ENCODE measurements at regions of chr1 and their contacts with region 1.

Region 1: DNA sequence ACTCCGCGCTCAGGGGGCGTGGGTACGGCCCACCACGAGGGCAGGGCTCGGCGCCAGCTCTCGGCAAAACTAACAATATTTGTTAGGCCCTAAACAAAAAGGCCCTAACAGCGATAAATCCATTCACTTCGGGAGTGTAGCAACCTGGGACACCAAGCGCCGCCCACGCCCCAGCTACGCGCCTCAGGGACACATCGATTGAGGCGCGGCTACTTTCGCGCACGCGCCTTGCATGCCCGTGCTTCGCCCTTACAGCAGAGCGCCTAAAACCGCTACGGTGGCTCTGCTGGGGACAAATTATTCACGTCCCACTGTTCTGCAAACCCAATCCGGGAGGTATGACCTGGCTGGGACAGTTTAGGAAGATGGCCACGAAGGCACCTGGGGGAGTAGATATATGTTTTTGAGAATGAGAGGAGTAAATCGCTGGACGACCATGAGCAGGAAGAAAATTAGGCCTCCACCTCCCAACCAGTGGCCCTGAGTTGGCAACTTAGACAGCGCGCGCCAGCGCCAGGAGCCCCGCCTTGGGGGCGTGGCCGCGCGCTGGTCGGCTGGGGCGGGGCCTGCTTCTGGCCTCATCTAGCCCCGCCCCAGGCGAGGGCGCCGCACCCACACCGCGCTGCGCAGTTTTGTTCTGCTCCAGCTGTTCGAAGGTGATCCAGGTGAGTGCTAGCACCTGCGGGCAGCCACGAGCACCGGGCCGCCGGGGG is at the start of gene MGST3:
- DNase-seq: peak; percentile 81 to 96 (median 91)
- ATAC-seq: peak; percentile 93
- H3K4me3 ChIP-seq: peak within 1 kb of the TSS; percentile 62 to 71
- H3K4me3 Mint-ChIP-seq: no peak within 1 kb of the TSS
- H3K27ac ChIP-seq: peak within 1 kb of the TSS; percentile 56 to 89
- H3K27ac Mint-ChIP-seq: peak within 1 kb of the TSS; percentile 66
- H3K4me1 ChIP-seq: peaks cover 17% of the 10 kb centered on the region
- H3K4me1 Mint-ChIP-seq: peaks cover 19% of the 10 kb centered on the region
- H3K27me3 ChIP-seq: no peaks in the 10 kb centered on the region
- H3K27me3 Mint-ChIP-seq: no peaks in the 10 kb centered on the region
- CTCF ChIP-seq: no peak
- total RNA-seq, gene MGST3: 13.8 to 16.6 TPM

Region 2: DNA sequence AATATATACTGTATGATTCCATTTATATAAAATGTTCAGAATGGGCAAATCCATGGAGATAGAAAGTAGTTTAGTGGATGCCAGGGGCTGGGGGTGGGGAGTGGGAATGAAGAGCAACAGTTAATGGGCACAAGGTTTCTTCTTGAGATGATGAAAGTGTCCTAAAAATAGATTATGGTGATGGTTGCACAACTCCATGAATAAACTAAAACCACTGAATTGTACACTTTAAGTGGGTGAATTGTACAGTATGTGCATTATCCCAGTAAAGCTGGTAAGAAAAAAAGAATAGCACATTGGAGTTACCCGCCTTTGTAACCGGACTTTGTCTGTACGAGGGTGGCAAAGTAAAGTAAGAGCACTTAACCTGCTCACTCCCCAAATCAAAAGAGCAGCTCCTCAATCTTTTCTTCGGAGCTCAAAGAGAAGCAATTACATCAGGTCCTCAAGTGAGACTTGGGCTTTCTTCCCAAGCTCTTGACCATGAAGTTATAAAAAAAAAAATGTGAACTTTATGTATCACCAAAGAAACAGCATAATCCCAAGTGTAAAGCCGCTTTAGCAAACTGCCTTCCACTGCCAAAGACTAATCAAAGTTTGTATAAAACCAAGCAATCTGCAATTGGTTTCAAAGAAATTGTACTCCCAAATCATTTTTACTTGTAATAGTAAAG is 35.5 kb after region 1 on chr1:
- CTCF ChIA-PET with region 1: no interaction called
- POLR2A ChIA-PET with region 1: no interaction called
- intact Hi-C with region 1: no loop called
- DNase-seq: no peak
- ATAC-seq: no peak
- H3K4me3 ChIP-seq: no peak overlapping the region
- H3K4me3 Mint-ChIP-seq: no peak overlapping the region
- H3K27ac ChIP-seq: no peak overlapping the region
- H3K27ac Mint-ChIP-seq: no peak overlapping the region
- H3K4me1 ChIP-seq: no peaks in the 10 kb centered on the region
- H3K4me1 Mint-ChIP-seq: no peaks in the 10 kb centered on the region
- H3K27me3 ChIP-seq: no peaks in the 10 kb centered on the region
- H3K27me3 Mint-ChIP-seq: no peaks in the 10 kb centered on the region
- CTCF ChIP-seq: no peak

Region 3: DNA sequence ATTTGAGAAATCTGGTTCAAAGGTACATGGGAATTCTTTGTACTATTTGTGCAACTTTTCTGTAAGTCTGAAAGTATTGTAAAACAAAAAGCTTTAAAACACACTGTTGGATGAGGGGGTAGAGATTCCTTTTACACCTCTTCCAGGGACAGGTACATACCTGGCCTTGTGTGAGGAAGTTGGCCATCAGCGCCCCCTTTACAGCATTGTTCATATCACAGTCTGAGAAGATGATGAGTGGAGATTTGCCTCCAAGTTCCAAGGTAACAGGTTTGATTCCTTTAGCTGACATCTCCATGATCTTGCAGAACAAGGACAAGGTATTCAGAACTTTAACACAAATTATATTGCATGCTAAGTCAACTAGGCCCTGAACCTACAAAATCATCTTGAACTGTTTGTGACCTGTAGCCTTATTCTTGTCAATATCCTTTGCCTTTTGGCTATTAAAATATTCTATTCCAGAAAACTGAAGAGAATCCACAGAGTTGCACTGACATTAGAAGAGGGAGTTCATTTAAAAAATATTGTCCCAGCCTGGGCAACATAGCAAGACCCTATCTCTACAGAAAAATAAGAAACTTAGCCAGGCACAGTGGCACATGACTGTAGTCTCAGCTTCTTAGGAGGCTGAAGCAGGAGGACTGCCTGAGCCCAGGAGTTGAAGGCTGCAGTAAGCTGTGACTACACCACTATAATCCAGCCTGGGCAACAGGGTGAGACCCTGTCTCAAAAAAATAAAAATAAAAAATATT is 48.7 kb after region 1 on chr1:
- CTCF ChIA-PET with region 1: no interaction called
- POLR2A ChIA-PET with region 1: no interaction called
- intact Hi-C with region 1: loop called in 1 of 2 experiments (anchors 5 kb)
- DNase-seq: no peak
- ATAC-seq: no peak
- H3K4me3 ChIP-seq: no peak overlapping the region
- H3K4me3 Mint-ChIP-seq: no peak overlapping the region
- H3K27ac ChIP-seq: no peak overlapping the region
- H3K27ac Mint-ChIP-seq: peak overlapping the region; percentile 2
- H3K4me1 ChIP-seq: peaks cover 15% of the 10 kb centered on the region
- H3K4me1 Mint-ChIP-seq: peaks cover 20% of the 10 kb centered on the region
- H3K27me3 ChIP-seq: no peaks in the 10 kb centered on the region
- H3K27me3 Mint-ChIP-seq: no peaks in the 10 kb centered on the region
- CTCF ChIP-seq: no peak

Region 4: GRCh38 chr1:165726169-165726568 is 95.4 kb after region 1 on chr1:
- CTCF ChIA-PET with region 1: no interaction called
- POLR2A ChIA-PET with region 1: no interaction called
- intact Hi-C with region 1: no loop called
- DNase-seq: no peak
- ATAC-seq: no peak
- H3K4me3 ChIP-seq: no peak overlapping the region
- H3K4me3 Mint-ChIP-seq: no peak overlapping the region
- H3K27ac ChIP-seq: no peak overlapping the region
- H3K27ac Mint-ChIP-seq: no peak overlapping the region
- H3K4me1 ChIP-seq: no peaks in the 10 kb centered on the region
- H3K4me1 Mint-ChIP-seq: no peaks in the 10 kb centered on the region
- H3K27me3 ChIP-seq: no peaks in the 10 kb centered on the region
- H3K27me3 Mint-ChIP-seq: no peaks in the 10 kb centered on the region
- CTCF ChIP-seq: no peak

Region 5: GRCh38 chr1:165768513-165769394 is 138.0 kb after region 1 on chr1 and contains the start of gene TMCO1:
- CTCF ChIA-PET with region 1: no interaction called
- POLR2A ChIA-PET with region 1: interaction called, 12 read pairs
- intact Hi-C with region 1: loop called (anchors 1 to 2 kb)
- DNase-seq: peak; percentile 84 to 99 (median 92)
- ATAC-seq: peak; percentile 93
- H3K4me3 ChIP-seq: peak within 1 kb of the TSS; percentile 85 to 93
- H3K4me3 Mint-ChIP-seq: peak within 1 kb of the TSS; percentile 99
- H3K27ac ChIP-seq: peak within 1 kb of the TSS; percentile 71 to 96
- H3K27ac Mint-ChIP-seq: peak within 1 kb of the TSS; percentile 99
- H3K4me1 ChIP-seq: peaks cover 50% of the 10 kb centered on the region
- H3K4me1 Mint-ChIP-seq: peaks cover 65% of the 10 kb centered on the region
- H3K27me3 ChIP-seq: no peaks in the 10 kb centered on the region
- H3K27me3 Mint-ChIP-seq: no peaks in the 10 kb centered on the region
- CTCF ChIP-seq: peak; percentile 24
- total RNA-seq, gene TMCO1: 30.5 to 33.5 TPM

Region 6: DNA sequence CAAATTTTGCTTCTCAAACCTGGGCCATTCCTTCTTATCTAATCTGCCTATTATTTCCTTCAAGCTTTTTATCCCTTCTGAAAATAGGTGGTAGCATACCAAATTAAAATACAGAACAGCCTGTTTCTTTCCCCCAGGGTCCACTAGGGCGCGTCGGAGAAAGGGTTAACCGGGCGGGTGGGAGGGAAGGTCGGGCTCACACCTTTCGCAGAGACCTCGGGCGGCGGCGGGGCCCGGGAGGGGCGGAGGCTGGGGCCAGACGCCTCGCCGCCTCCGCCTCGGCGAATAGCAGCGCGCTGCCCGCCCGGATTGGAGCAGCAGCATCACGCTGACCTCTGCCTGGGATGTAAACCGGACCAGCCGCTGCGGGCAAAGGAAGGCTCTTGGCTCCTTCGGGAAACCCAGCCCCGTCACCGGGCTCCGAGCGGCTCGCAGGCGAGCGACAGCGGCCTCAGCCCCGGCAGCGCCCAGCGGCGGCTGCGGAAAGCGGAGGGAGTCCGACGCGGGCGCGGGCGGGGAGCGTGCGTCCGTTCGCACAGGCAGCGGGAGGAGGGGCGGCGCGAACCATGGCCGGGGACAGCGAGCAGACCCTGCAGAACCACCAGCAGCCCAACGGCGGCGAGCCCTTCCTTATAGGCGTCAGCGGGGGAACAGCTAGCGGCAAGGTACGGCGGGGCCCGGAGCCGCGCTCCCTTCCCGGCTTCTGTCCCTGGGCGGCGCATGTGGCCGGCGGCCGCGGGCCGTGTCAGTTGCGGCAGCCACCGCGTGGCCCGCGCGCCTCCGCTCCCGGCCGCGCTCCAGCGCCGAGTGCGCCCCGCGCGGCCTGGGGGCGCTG is 196.7 kb after region 1 on chr1 and contains the start of gene UCK2:
- CTCF ChIA-PET with region 1: no interaction called
- POLR2A ChIA-PET with region 1: no interaction called
- intact Hi-C with region 1: loop called in 1 of 2 experiments (anchors 5 kb)
- DNase-seq: peak; percentile 4 to 74 (median 47)
- ATAC-seq: peak; percentile 75
- H3K4me3 ChIP-seq: peak within 1 kb of the TSS; percentile 72 to 81
- H3K4me3 Mint-ChIP-seq: peak within 1 kb of the TSS; percentile 89
- H3K27ac ChIP-seq: peak within 1 kb of the TSS; percentile 33 to 43
- H3K27ac Mint-ChIP-seq: peak within 1 kb of the TSS; percentile 81
- H3K4me1 ChIP-seq: peaks cover 11% of the 10 kb centered on the region
- H3K4me1 Mint-ChIP-seq: peaks cover 21% of the 10 kb centered on the region
- H3K27me3 ChIP-seq: no peaks in the 10 kb centered on the region
- H3K27me3 Mint-ChIP-seq: peaks cover 2% of the 10 kb centered on the region
- CTCF ChIP-seq: no peak
- total RNA-seq, gene UCK2: 1.1 to 1.7 TPM